Transverse colon (tissue), 4 donors: ENCODE measurements at regions of chr4 and their contacts with region 1.

Region 1: GRCh38 chr4:56301181-56302076 is 85.9 kb downstream of the AASDH start:
- DNase-seq: peak; percentile 77
- H3K4me3 ChIP-seq: no peak overlapping the region
- H3K27ac ChIP-seq: peak overlapping the region in 1 of 4 donors; percentile 15
- H3K4me1 ChIP-seq: peaks cover 7 to 23% (median 8%) of the 10 kb centered on the region in 4 donors
- H3K27me3 ChIP-seq: no peaks in the 10 kb centered on the region
- CTCF ChIP-seq: peak; percentile 73 to 91 (median 84)
- EP300 ChIP-seq: no peak
- POLR2A ChIP-seq: no peak

Region 2: GRCh38 chr4:55948726-55949474 is 352.5 kb before region 1 on chr4 and contains the start of gene CEP135:
- in situ Hi-C with region 1: loop called (anchors 10 to 25 kb)
- intact Hi-C with region 1: no loop called
- DNase-seq: peak; percentile 96
- H3K4me3 ChIP-seq: peak within 1 kb of the TSS; percentile 30 to 72 (median 64)
- H3K27ac ChIP-seq: peak within 1 kb of the TSS; percentile 84 to 94 (median 90)
- H3K4me1 ChIP-seq: peaks cover 8 to 27% (median 19%) of the 10 kb centered on the region in 4 donors
- H3K27me3 ChIP-seq: no peaks in the 10 kb centered on the region
- CTCF ChIP-seq: peak; percentile 91 to 96 (median 95)
- EP300 ChIP-seq: no peak
- POLR2A ChIP-seq: peak; percentile 42
- total RNA-seq, gene CEP135: 4.5 to 18.0 (median 9.9) TPM

Region 3: DNA sequence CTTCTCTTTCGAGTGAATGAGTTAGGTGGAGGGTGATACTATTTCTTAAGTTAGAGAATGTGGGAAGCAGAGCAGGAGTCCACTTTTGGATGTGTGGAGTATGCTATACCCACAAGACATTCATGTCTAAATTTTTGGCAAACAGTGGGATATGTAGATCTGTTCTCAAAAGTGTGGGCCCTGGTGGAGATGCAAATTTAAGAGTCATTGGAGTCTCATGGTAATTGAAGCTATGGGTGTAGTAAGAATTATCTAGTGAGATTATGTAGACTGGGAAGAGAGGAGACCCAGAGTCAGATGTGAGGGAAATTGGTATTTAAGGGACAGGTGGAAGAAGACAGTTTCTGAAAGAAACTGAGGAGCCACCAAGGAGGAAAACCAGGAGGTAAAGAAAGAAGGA is 345.7 kb before region 1 on chr4:
- in situ Hi-C with region 1: loop called in 1 of 4 experiments (anchors 10 kb)
- intact Hi-C with region 1: no loop called
- DNase-seq: no peak
- H3K4me3 ChIP-seq: no peak overlapping the region
- H3K27ac ChIP-seq: no peak overlapping the region
- H3K4me1 ChIP-seq: peaks cover 0 to 2% (median 0%) of the 10 kb centered on the region in 4 donors
- H3K27me3 ChIP-seq: no peaks in the 10 kb centered on the region
- CTCF ChIP-seq: no peak
- EP300 ChIP-seq: no peak
- POLR2A ChIP-seq: no peak

Region 4: DNA sequence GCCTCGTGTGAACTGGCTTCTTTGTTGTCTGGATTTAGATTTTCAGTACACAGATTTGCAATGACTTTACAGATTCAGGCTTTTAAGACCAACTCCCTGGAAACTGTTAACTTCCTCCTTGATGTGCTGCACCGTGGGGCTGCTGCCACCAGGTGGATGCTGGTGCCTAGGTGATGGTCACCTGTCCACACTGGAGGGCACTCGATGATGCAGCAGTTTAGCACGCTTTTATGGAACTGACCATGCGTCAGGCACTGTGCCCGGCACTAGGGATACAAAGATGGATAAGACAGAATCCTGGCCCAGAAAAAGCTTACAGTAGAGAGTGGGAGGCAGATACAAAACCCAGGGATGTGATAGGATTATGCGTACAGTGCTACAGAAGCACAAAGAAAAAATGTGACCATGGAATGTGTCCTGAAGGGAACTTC is 172.0 kb before region 1 on chr4:
- in situ Hi-C with region 1: loop called in 1 of 4 experiments (anchors 10 kb)
- intact Hi-C with region 1: no loop called
- DNase-seq: peak; percentile 77
- H3K4me3 ChIP-seq: no peak overlapping the region
- H3K27ac ChIP-seq: no peak overlapping the region
- H3K4me1 ChIP-seq: no peaks in the 10 kb centered on the region
- H3K27me3 ChIP-seq: no peaks in the 10 kb centered on the region
- CTCF ChIP-seq: peak; percentile 46 to 85 (median 68)
- EP300 ChIP-seq: no peak
- POLR2A ChIP-seq: no peak

Region 5: DNA sequence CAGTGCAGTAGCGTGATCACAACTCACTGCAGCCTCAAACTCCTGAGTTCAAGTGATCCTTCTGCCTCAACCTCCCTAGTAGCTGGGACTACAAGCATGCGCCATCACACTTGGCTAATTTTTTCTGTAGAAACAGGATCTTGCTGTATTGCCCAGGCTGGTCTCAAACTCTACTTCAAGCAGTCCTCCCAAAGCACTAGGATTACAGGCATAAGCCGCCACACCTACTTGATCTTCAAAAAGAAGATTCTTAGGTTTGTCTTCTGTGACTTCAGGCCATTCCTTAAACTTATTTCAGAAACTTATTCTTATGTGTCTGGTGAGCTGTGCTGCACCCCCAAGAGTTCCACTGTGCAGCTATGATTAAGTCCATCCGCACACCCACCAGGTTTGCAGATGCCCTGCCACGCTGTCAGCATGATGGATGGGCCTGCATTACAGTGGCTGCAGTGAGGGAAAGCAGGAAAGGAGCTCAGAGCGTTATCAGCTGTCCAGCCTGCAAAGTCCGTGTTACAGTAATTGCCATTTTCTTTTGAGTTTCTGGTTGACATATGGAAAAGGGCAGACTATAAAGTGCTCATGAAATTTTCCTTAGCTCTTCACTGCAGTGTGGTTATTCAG is 60.8 kb before region 1 on chr4:
- in situ Hi-C with region 1: no loop called
- intact Hi-C with region 1: no loop called
- DNase-seq: no peak
- H3K4me3 ChIP-seq: no peak overlapping the region
- H3K27ac ChIP-seq: peak overlapping the region; percentile 60 to 75 (median 63)
- H3K4me1 ChIP-seq: peaks cover 0 to 24% (median 6%) of the 10 kb centered on the region in 4 donors
- H3K27me3 ChIP-seq: no peaks in the 10 kb centered on the region
- CTCF ChIP-seq: no peak
- EP300 ChIP-seq: no peak
- POLR2A ChIP-seq: no peak